Cardiac septum (tissue), 1 donor: ENCODE measurements at regions of chr1 and their contacts with region 1.

Region 1: DNA sequence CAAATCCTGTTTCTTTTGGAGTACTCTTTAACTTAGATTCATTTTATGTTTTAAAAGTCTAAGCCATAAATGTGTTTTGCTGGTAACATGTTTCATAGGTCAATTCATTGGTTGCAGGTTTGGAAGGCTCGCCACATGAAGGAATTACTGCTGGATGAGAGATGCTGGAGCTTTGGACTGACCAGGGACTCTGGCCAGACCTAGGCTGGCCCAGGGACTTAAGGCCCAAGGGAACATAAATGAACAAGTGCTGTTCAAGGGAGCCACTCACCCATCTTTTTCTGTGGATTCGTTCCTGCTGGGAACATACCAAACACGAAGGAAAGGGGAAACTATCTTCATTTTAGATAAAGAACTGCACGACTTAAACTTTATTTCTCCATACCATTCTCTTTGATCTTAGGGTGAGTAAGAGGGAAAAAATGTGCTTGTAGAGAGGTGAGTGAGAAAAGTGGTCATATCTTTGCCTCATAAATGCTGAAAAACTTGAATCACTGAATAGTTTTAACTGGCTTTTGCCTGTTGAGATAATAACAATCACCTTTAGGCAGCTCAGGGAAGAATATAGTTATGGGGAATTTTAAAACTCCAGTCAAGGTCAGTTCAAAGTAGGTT is 15.3 kb upstream of the SHCBP1L start:
- DNase-seq: no peak

Region 2: GRCh38 chr1:183126528-183126927 is 158.3 kb after region 1 on chr1:
- intact Hi-C with region 1: loop called (anchors 5 kb)
- DNase-seq: no peak

Region 3: GRCh38 chr1:183353597-183353996 is 385.3 kb after region 1 on chr1:
- intact Hi-C with region 1: no loop called
- DNase-seq: no peak